A673 (cell line): ENCODE measurements at regions of chr16 and their contacts with region 1.

Region 1: DNA sequence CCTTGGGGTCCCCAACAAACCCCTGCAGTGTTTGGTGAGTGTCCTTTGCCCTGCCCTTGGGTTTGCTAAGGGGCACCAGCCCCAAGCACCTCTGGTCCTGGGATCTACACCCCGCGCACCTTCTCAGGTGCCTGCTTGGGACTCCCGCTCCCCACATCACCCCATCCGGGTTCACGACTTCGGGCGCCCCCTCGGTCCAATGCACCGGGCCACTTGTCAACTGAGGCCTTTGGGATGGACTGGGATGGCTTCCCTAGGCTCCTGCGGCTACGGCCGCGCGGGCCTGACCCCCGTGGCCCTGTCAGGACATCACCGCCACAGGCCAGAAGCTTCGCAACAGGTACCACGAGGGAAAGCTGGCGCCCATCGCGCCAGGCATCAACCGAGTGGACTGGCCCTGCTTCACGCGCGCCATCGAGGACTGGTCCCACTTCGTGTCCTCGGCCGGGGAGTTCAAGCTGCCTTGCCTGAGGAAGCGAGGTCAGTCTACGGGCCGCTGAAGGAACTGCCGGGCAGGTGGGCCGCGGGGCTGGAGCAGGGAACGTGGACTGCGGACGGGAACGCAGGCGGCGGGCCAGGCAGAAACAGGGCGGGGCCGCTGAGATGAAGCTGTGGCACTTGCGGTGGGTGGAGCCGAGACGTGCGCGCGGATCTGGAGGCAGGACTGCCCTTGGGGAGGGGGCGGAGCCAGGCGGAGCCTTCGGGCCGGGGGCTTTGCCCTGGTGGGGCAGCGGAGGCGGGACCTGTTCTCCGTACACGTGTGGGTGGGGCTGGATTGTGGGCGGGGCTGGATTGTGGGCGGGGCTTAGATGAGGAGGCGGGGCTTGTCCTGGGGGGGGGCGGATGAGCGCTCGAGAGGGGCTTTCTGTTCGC is 13.6 kb upstream of the CNGB1 start:
- DNase-seq: peak; percentile 97
- H3K4me3 ChIP-seq: peak overlapping the region; percentile 64
- H3K27ac ChIP-seq: no peak overlapping the region
- H3K4me1 ChIP-seq: peaks cover 3% of the 10 kb centered on the region
- H3K27me3 ChIP-seq: no peaks in the 10 kb centered on the region
- CTCF ChIP-seq: no peak

Region 2: GRCh38 chr16:58212824-58213655 is 228.5 kb after region 1 on chr16:
- CTCF ChIA-PET with region 1: no interaction called
- POLR2A ChIA-PET with region 1: interaction called, 14 read pairs
- intact Hi-C with region 1: no loop called
- DNase-seq: no peak
- H3K4me3 ChIP-seq: no peak overlapping the region
- H3K27ac ChIP-seq: no peak overlapping the region
- H3K4me1 ChIP-seq: no peaks in the 10 kb centered on the region
- H3K27me3 ChIP-seq: peaks cover 18% of the 10 kb centered on the region
- CTCF ChIP-seq: no peak

Region 3: GRCh38 chr16:58589326-58589905 is 604.8 kb after region 1 on chr16:
- CTCF ChIA-PET with region 1: no interaction called
- POLR2A ChIA-PET with region 1: no interaction called
- intact Hi-C with region 1: no loop called
- DNase-seq: no peak
- H3K4me3 ChIP-seq: no peak overlapping the region
- H3K27ac ChIP-seq: no peak overlapping the region
- H3K4me1 ChIP-seq: peaks cover 15% of the 10 kb centered on the region
- H3K27me3 ChIP-seq: no peaks in the 10 kb centered on the region
- CTCF ChIP-seq: no peak